GM12878 (cell line): ENCODE measurements at regions of chr7 and their contacts with region 1.

Region 1: DNA sequence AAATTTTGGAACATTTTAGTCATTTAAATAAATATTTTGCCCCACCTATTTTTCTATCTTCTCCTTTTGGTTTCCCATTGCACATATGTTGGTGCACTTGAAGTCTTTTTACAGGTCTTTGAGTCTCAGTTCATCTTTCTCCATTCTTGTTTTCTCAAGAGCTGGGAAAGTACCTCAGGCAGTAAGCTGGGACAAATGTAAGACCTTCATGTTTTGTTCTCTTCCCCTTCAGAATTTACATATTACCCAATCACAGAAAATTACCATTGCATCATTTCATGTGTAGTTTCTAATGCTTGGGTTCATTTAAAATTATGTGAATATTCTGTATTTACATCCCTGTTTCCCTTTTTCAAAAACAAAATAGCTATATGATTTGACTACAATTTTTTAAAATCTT is 1150.0 kb upstream of the POT1 start:
- DNase-seq: peak; percentile 15
- ATAC-seq: peak; percentile 82
- H3K4me3 ChIP-seq: no peak overlapping the region
- H3K27ac ChIP-seq: no peak overlapping the region
- H3K4me1 ChIP-seq: no peaks in the 10 kb centered on the region
- H3K27me3 ChIP-seq: no peaks in the 10 kb centered on the region
- CTCF ChIP-seq: no peak
- EP300 ChIP-seq: no peak
- POLR2A ChIP-seq: no peak
- RAD21 ChIP-seq: no peak

Region 2: DNA sequence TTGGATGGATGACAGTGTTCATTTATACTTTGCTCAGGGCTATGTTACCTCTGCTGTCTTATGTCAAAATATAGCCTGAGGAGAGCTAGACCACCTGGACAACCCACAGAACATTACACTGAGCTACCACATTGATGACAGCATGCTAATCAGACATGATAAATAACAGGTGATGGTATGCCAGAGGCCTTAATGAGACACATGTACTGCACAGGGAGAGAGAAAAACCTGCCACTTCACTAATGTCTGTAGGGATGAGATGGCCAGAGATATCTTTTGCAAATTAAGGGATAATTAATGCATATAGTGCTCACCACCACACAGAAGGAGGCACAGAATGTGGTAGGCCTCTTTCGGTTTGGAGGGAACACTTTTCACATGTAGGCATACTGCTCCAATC is 27.4 kb before region 1 on chr7:
- CTCF ChIA-PET with region 1: no interaction called
- POLR2A ChIA-PET with region 1: no interaction called
- RAD21 ChIA-PET with region 1: no interaction called
- SMC1A ChIA-PET with region 1: no interaction called
- in situ Hi-C with region 1: no loop called
- intact Hi-C with region 1: no loop called
- DNase-seq: no peak
- ATAC-seq: no peak
- H3K4me3 ChIP-seq: no peak overlapping the region
- H3K27ac ChIP-seq: no peak overlapping the region
- H3K4me1 ChIP-seq: no peaks in the 10 kb centered on the region
- H3K27me3 ChIP-seq: no peaks in the 10 kb centered on the region
- CTCF ChIP-seq: no peak
- EP300 ChIP-seq: no peak
- POLR2A ChIP-seq: no peak
- RAD21 ChIP-seq: no peak

Region 3: DNA sequence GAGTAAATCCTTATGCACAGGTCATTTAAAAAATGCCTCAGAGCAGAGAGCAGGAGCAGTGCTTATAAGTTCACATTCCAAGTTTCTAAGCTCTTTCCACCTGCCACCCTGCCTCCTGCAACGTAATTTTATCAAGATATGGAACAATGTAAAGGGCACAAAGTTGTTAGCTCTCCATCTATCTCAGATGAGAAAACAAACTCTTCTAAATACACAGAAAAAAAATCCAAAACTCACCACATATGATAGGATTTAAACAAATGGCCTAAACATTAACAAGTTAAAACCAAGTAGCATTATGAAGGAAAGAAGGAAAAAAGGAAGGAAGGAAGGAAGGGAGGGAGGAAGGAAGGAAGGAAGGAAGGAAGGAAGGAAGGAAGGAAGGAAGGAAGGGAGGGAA is 40.4 kb after region 1 on chr7:
- CTCF ChIA-PET with region 1: no interaction called
- POLR2A ChIA-PET with region 1: no interaction called
- RAD21 ChIA-PET with region 1: no interaction called
- SMC1A ChIA-PET with region 1: no interaction called
- in situ Hi-C with region 1: no loop called
- intact Hi-C with region 1: loop called (anchors 5 kb)
- DNase-seq: no peak
- ATAC-seq: no peak
- H3K4me3 ChIP-seq: no peak overlapping the region
- H3K27ac ChIP-seq: no peak overlapping the region
- H3K4me1 ChIP-seq: no peaks in the 10 kb centered on the region
- H3K27me3 ChIP-seq: no peaks in the 10 kb centered on the region
- CTCF ChIP-seq: no peak
- EP300 ChIP-seq: no peak
- POLR2A ChIP-seq: no peak
- RAD21 ChIP-seq: no peak